Caco-2 (cell line): ENCODE measurements at regions of chr17 and their contacts with region 1.

Region 1: DNA sequence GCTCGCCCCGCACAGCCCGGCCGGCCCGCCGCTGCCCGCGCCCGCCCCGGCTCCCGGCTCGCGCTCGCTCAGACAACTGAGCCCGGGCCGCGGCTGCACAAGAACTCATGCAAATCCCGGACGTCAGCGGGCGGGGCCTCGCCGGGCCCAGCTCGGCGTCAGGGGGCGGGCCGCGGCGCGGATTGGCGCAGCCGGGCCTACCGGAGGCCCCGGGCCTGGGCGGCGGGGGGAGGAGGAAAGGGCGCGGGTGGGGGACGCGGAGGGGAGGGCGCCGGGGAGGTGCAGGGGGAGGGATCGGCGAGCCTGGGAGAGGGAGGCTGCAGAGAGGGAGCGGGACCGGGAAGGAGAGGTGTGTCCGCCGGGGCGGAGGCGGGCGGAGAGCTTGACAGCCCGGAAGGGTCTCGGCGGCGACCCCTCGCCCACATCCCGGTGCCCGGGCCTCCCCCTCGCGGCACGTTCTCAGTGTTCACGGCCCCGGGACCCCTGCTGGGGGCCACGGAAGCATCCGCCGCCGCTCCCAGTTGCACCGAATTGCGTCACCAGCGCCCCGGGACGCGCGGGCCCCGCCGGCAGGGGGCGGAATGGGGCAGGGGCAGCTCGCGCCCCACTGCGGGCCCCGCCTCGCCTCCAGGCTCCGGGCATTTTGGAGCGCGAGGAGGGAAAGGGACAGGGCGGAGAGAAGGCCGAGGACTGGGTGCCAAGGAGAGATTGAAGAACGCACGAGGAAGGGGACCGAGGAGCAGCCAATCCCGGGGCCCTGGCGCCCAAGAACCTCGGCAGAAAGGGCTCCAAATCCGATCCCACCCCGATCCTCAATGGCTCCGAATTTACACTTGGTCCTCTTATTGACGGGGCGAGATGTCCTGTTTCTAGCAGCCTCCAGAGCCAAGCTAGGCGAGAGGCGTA is at the start of gene CBX4:
- DNase-seq: peak; percentile 97 to 98
- H3K4me3 ChIP-seq: peak within 1 kb of the TSS; percentile 77
- H3K4me3 Mint-ChIP-seq: peak within 1 kb of the TSS; percentile 80
- H3K27ac Mint-ChIP-seq: peak within 1 kb of the TSS; percentile 91
- H3K4me1 ChIP-seq: peaks cover 51% of the 10 kb centered on the region
- H3K4me1 Mint-ChIP-seq: no peaks in the 10 kb centered on the region
- H3K27me3 ChIP-seq: no peaks in the 10 kb centered on the region
- H3K27me3 Mint-ChIP-seq: no peaks in the 10 kb centered on the region
- CTCF ChIP-seq: peak; percentile 77 to 97
- total RNA-seq, gene CBX4: 90.8 and 114 TPM in 2 replicates

Region 2: GRCh38 chr17:79658811-79659207 is 180.8 kb before region 1 on chr17:
- CTCF ChIA-PET with region 1: no interaction called
- POLR2A ChIA-PET with region 1: no interaction called
- intact Hi-C with region 1: no loop called
- DNase-seq: peak; percentile 57 to 59
- H3K4me3 ChIP-seq: no peak overlapping the region
- H3K4me3 Mint-ChIP-seq: no peak overlapping the region
- H3K27ac Mint-ChIP-seq: no peak overlapping the region
- H3K4me1 ChIP-seq: no peaks in the 10 kb centered on the region
- H3K4me1 Mint-ChIP-seq: peaks cover 9% of the 10 kb centered on the region
- H3K27me3 ChIP-seq: no peaks in the 10 kb centered on the region
- H3K27me3 Mint-ChIP-seq: peaks cover 7% of the 10 kb centered on the region
- CTCF ChIP-seq: peak; percentile 57 to 79

Region 3: DNA sequence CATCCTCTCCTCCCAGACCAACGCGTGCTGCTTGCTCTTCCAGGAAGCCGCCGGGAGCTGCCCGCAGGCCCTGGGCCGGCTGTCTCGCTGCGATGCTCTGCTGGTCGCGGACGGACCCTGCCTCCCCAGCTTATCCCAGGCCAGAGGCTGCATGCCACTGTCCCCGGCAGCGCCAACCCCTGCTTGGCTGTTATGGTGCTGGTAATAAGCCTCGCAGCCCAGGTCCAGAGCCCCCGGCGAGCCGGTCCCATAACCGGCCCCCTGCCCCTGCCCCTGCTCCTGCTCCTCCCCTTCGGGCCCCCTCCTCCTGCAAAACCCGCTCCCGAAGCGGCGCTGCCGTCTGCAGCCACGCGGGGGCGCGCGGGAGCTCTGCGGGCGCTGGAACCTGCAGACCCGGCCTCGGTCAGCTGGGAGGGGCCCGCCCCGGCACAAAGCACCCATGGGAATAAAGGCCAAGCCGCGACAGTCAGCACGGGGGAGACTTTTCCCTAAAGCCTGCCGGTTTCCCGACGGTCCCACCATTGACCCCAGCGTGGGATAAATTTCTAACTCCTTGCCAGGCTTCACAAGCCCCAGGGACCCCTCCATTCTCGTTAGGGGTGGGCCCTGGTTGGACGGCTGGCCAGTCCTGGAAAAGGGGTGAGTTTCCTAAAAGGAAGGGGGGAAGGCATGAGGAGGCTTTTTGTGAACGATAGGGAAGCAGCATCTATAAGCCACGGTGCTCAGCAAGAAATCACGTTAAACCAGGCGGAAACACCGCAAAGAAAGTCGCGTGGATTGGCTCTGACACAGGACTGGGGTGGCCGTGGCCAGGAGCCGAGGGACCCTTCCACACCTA is 97.6 kb before region 1 on chr17:
- CTCF ChIA-PET with region 1: interaction called, 6 read pairs
- POLR2A ChIA-PET with region 1: interaction called, 40 read pairs
- intact Hi-C with region 1: loop called (anchors 2 kb)
- DNase-seq: peak; percentile 91 to 98
- H3K4me3 ChIP-seq: peak overlapping the region; percentile 56
- H3K4me3 Mint-ChIP-seq: peak overlapping the region; percentile 75
- H3K27ac Mint-ChIP-seq: peak overlapping the region; percentile 45
- H3K4me1 ChIP-seq: peaks cover 60% of the 10 kb centered on the region
- H3K4me1 Mint-ChIP-seq: peaks cover 21% of the 10 kb centered on the region
- H3K27me3 ChIP-seq: no peaks in the 10 kb centered on the region
- H3K27me3 Mint-ChIP-seq: no peaks in the 10 kb centered on the region
- CTCF ChIP-seq: peak; percentile 95 to 98

Region 4: GRCh38 chr17:79784353-79785016 is 55.1 kb before region 1 on chr17:
- CTCF ChIA-PET with region 1: no interaction called
- POLR2A ChIA-PET with region 1: no interaction called
- intact Hi-C with region 1: no loop called
- DNase-seq: no peak
- H3K4me3 ChIP-seq: no peak overlapping the region
- H3K4me3 Mint-ChIP-seq: no peak overlapping the region
- H3K27ac Mint-ChIP-seq: no peak overlapping the region
- H3K4me1 ChIP-seq: peaks cover 2% of the 10 kb centered on the region; the same call in 1 of the 2 replicates
- H3K4me1 Mint-ChIP-seq: peaks cover 7% of the 10 kb centered on the region
- H3K27me3 ChIP-seq: no peaks in the 10 kb centered on the region
- H3K27me3 Mint-ChIP-seq: no peaks in the 10 kb centered on the region
- CTCF ChIP-seq: no peak

Region 5: GRCh38 chr17:79803997-79804855 is 35.4 kb before region 1 on chr17:
- CTCF ChIA-PET with region 1: interaction called, 17 read pairs
- POLR2A ChIA-PET with region 1: interaction called, 5 read pairs
- intact Hi-C with region 1: loop called (anchors 5 kb)
- DNase-seq: peak; percentile 71 to 80
- H3K4me3 ChIP-seq: peak overlapping the region; percentile 61
- H3K4me3 Mint-ChIP-seq: peak overlapping the region; percentile 84
- H3K27ac Mint-ChIP-seq: peak overlapping the region; percentile 51
- H3K4me1 ChIP-seq: peaks cover 28% of the 10 kb centered on the region
- H3K4me1 Mint-ChIP-seq: peaks cover 22% of the 10 kb centered on the region
- H3K27me3 ChIP-seq: no peaks in the 10 kb centered on the region
- H3K27me3 Mint-ChIP-seq: no peaks in the 10 kb centered on the region
- CTCF ChIP-seq: no peak

Region 6: DNA sequence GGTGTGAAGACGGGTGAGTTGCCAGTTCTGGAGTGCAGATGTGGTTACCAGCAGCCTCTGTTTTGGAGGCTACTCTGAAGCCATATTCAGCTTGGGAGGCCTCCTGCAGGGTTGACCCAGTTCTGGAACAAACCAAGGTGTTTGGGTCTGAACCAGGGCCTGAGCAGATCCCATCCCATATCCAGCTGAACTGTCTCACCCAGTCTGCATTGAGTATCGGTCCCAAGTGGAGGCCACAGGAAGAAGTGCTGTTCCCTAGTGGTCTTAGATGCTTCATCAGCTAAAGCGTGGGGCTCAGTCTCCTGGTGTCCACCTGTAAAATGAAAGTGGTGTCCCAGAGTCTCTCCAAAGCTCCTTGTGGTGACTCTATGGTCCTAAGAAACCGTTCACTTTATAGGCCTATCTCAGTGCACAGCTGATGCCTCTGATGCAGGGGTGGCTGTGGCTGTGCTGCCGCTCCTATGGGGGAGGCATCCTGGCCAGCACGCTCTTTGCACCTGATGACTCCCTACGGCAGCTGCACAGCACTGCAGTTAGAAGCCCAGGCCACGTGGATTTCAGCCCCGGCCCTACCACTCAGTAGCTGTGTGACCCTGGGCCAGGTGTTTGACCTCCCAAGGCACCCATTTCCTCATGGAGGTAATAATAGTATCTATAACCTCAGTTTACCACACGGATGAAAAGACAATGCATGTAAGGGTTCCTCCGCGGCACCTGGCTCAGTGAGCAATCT is 21.4 kb before region 1 on chr17:
- CTCF ChIA-PET with region 1: interaction called, 56 read pairs
- POLR2A ChIA-PET with region 1: interaction called, 12 read pairs
- intact Hi-C with region 1: no loop called
- DNase-seq: no peak
- H3K4me3 ChIP-seq: no peak overlapping the region
- H3K4me3 Mint-ChIP-seq: no peak overlapping the region
- H3K27ac Mint-ChIP-seq: no peak overlapping the region
- H3K4me1 ChIP-seq: peaks cover 20% of the 10 kb centered on the region
- H3K4me1 Mint-ChIP-seq: no peaks in the 10 kb centered on the region
- H3K27me3 ChIP-seq: no peaks in the 10 kb centered on the region
- H3K27me3 Mint-ChIP-seq: no peaks in the 10 kb centered on the region
- CTCF ChIP-seq: no peak

Region 7: DNA sequence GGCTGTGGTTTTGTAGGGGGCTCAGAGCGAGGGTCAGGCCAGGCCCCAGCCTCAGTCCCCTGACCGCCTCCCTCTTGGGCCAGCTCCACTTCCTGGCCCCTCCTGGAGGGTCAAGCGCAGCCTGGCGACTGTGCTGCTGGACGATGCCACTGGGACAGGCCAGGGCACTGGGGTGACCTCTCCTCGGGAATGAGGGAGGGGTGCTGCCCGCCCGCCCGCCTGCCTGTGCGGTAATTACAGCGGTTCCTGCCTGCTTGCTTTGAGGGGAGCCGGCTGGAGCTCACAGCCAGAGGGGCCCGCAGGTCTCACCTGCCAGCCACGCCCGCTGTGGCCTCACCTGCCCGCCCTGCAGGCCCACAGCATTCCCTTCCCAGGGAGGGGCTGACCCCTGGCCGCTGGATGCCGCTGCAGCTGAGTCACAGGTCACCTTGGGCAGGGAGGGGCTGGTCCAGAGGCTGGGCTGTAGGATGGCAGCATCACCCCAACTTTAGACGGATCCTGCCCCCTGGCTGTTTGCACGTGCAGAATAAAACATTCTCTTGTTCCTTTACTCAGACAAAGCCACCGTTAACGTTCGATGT is 76.3 kb after region 1 on chr17:
- CTCF ChIA-PET with region 1: interaction called, 87 read pairs
- POLR2A ChIA-PET with region 1: interaction called, 174 read pairs
- intact Hi-C with region 1: loop called (anchors 1 kb)
- DNase-seq: peak; percentile 99
- H3K4me3 ChIP-seq: no peak overlapping the region
- H3K4me3 Mint-ChIP-seq: peak overlapping the region; percentile 52
- H3K27ac Mint-ChIP-seq: peak overlapping the region; percentile 98
- H3K4me1 ChIP-seq: peaks cover 61% of the 10 kb centered on the region
- H3K4me1 Mint-ChIP-seq: peaks cover 22% of the 10 kb centered on the region
- H3K27me3 ChIP-seq: no peaks in the 10 kb centered on the region
- H3K27me3 Mint-ChIP-seq: no peaks in the 10 kb centered on the region
- CTCF ChIP-seq: peak; percentile 36 to 66

Region 8: DNA sequence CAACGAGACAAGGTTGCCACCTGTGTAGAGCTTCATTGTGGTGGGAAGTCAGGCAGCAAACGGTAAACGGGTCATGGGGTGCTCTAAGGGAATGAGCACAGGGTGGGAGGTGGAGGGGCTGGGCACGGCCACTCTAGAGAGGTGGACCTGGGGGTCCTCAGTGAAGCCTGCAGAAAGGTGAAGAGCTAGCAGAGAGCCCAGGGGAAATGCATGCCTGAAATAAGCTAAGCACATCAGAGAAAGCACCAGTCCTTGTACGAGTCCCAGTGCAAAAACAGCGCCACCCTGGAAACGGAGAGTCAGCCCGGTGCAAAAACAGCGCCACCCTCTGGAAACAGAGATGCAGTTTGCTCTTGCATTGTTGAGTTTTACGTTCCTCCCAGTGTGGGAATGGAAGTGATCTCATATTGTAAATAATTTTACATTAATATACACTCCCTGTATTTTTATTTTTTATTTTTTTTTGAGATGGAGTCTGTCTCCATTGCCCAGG is 131.0 kb after region 1 on chr17:
- CTCF ChIA-PET with region 1: interaction called, 12 read pairs
- POLR2A ChIA-PET with region 1: interaction called, 9 read pairs
- intact Hi-C with region 1: no loop called
- DNase-seq: peak in 1 of 2 experiments; percentile 57
- H3K4me3 ChIP-seq: no peak overlapping the region
- H3K4me3 Mint-ChIP-seq: no peak overlapping the region
- H3K27ac Mint-ChIP-seq: no peak overlapping the region
- H3K4me1 ChIP-seq: peaks cover 6% of the 10 kb centered on the region; the same call in 1 of the 2 replicates
- H3K4me1 Mint-ChIP-seq: peaks cover 7% of the 10 kb centered on the region
- H3K27me3 ChIP-seq: no peaks in the 10 kb centered on the region
- H3K27me3 Mint-ChIP-seq: no peaks in the 10 kb centered on the region
- CTCF ChIP-seq: peak; percentile 49 to 72